ENCODE measurements at regions of chr18 and their contacts with region 1.

Region 1: DNA sequence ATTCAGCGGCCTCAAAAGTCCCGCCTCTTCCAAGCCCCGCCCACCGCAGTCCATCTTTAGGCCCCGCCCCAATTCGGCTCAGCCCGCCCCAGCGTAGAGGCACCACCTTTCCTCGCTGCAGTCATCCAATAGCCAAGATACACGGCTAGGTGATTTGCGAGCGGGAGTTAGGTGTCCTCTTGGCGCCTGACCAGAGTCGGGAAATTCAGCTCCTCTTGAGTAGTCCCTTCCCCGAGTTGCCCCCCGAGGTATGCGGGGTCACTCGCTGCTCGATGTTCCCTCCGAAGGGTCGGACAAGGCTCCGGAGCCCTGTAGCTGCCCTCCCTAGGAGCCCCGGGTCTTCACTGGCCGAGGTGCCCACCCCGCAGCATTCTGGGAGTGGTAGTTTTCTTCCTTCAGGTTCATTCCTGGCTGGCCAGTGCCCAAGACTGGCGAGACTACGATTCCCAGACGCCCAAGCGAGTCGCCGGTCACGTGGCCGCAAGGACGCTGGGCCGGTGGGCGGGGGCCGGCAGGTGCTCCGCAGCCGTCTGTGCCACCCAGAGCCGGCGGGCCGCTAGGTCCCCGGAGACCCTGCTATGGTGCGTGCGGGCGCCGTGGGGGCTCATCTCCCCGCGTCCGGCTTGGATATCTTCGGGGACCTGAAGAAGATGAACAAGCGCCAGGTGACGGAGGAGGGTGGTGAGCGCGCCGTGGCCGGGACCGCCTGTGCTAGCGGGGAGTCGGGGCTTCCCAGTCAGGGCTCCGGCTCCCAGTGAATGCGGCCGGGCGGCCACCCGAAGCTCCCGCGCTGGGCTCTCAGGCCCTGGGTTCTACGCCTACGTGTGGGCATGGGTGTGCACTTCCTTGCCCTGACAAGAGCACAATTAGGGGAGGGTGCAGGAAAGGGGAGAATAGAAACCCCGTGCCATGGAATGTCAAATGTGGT is at the start of gene SEC11C:
- DNase-seq: peak; percentile 97
- H3K4me3 Mint-ChIP-seq: peak within 1 kb of the TSS; percentile 90
- H3K27ac Mint-ChIP-seq: peak within 1 kb of the TSS; percentile 97
- H3K4me1 Mint-ChIP-seq: peaks cover 43% of the 10 kb centered on the region
- H3K27me3 Mint-ChIP-seq: peaks cover 3% of the 10 kb centered on the region
- total RNA-seq, gene SEC11C: 45.0 to 46.7 TPM

Region 2: GRCh38 chr18:57630002-57630753 is 1509.5 kb before region 1 on chr18:
- CTCF ChIA-PET with region 1: no interaction called
- intact Hi-C with region 1: loop called (anchors 5 kb)
- DNase-seq: peak; percentile 97
- H3K4me3 Mint-ChIP-seq: peak overlapping the region; percentile 95
- H3K27ac Mint-ChIP-seq: peak overlapping the region; percentile 92
- H3K4me1 Mint-ChIP-seq: peaks cover 14% of the 10 kb centered on the region
- H3K27me3 Mint-ChIP-seq: no peaks in the 10 kb centered on the region

Region 3: GRCh38 chr18:59085797-59086196 is 53.8 kb before region 1 on chr18:
- CTCF ChIA-PET with region 1: interaction called, 3 read pairs
- intact Hi-C with region 1: loop called (anchors 1 kb)
- DNase-seq: no peak
- H3K4me3 Mint-ChIP-seq: no peak overlapping the region
- H3K27ac Mint-ChIP-seq: no peak overlapping the region
- H3K4me1 Mint-ChIP-seq: peaks cover 12% of the 10 kb centered on the region
- H3K27me3 Mint-ChIP-seq: peaks cover 23% of the 10 kb centered on the region

Region 4: DNA sequence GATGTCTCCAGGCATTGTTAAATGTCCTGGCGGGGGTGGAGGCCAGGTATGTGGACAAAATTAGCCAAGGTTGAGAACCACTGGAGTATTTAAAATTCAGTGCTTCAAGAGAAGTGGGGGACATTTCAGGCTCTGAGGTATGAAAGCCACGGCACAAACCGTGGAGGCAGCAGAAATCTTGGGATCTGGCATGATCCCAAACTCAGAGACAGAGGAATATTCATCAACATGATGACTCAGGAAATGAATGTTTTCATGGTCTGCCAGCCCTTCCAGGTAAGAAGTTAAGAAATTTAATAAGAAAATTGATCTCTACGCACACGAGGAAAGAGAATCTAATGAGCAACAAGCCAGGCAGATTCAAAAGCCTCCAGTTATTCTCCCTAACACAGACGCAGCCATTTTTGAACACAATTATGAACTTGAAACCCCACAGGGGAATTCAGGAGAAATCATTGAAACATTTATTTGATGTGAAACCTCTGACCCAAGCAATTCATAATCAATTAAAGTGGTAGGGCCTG is 69.0 kb after region 1 on chr18:
- CTCF ChIA-PET with region 1: no interaction called
- intact Hi-C with region 1: no loop called
- DNase-seq: no peak
- H3K4me3 Mint-ChIP-seq: no peak overlapping the region
- H3K27ac Mint-ChIP-seq: no peak overlapping the region
- H3K4me1 Mint-ChIP-seq: no peaks in the 10 kb centered on the region
- H3K27me3 Mint-ChIP-seq: peaks cover 5% of the 10 kb centered on the region

Region 5: DNA sequence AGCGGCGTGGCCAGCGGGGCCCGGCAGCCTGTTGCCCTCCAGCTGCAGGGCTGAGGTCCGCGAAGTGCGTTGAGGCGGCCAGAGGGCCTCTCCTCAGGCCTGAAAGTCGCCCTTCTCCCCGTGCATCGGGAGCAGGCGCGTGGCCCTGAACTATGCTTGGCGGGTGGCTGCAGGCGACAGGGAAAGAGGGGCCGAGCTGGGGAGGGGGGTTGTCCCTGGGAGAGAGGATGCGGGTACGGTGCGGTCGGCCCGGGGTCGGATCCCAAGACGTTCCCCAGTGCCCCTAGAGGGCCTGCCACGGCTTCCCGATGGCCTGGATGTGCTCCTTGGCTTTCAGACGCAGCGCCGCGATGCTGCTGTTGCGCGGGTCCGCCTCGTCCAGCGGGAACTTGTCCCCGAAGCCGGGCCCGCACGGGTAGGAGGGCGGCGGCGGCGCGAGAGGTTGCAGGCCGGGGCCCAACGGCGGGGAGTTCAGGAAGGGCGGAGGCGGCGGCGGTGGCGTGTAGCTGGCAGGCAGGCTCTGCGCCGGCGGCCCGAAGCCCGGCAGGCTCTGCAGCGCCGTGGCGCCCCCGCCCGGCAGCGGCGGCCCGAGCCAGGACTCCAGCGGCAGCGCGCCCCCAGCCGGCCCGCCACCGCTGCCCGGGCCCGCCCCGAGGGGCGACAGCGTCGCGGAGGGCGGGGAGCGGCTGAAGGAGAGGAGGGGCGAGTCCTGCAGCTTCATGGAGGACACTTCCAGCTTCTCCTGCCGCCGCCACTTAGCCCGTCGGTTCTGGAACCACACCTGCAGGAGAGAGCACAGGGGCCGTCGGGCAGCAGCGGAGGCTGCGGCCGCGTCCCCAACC is 129.3 kb after region 1 on chr18:
- CTCF ChIA-PET with region 1: interaction called, 3 read pairs
- intact Hi-C with region 1: loop called (anchors 2 kb)
- DNase-seq: peak; percentile 68
- H3K4me3 Mint-ChIP-seq: peak overlapping the region; percentile 39
- H3K27ac Mint-ChIP-seq: no peak overlapping the region
- H3K4me1 Mint-ChIP-seq: peaks cover 29% of the 10 kb centered on the region
- H3K27me3 Mint-ChIP-seq: peaks cover 81% of the 10 kb centered on the region

Region 6: GRCh38 chr18:59358712-59359575 is 219.3 kb after region 1 on chr18 and contains the start of gene LMAN1:
- CTCF ChIA-PET with region 1: no interaction called
- intact Hi-C with region 1: loop called (anchors 1 kb)
- DNase-seq: peak; percentile 96
- H3K4me3 Mint-ChIP-seq: peak within 1 kb of the TSS; percentile 98
- H3K27ac Mint-ChIP-seq: peak within 1 kb of the TSS; percentile 98
- H3K4me1 Mint-ChIP-seq: peaks cover 36% of the 10 kb centered on the region
- H3K27me3 Mint-ChIP-seq: no peaks in the 10 kb centered on the region
- total RNA-seq, gene LMAN1: 146 to 151 TPM

Region 7: GRCh38 chr18:59927246-59927825 is 787.7 kb after region 1 on chr18:
- CTCF ChIA-PET with region 1: no interaction called
- intact Hi-C with region 1: loop called (anchors 1 kb)
- DNase-seq: peak; percentile 77
- H3K4me3 Mint-ChIP-seq: no peak overlapping the region
- H3K27ac Mint-ChIP-seq: peak overlapping the region; percentile 83
- H3K4me1 Mint-ChIP-seq: peaks cover 32% of the 10 kb centered on the region
- H3K27me3 Mint-ChIP-seq: peaks cover 6% of the 10 kb centered on the region